ENCODE measurements at regions of chr2 and their contacts with region 1.

Region 1: DNA sequence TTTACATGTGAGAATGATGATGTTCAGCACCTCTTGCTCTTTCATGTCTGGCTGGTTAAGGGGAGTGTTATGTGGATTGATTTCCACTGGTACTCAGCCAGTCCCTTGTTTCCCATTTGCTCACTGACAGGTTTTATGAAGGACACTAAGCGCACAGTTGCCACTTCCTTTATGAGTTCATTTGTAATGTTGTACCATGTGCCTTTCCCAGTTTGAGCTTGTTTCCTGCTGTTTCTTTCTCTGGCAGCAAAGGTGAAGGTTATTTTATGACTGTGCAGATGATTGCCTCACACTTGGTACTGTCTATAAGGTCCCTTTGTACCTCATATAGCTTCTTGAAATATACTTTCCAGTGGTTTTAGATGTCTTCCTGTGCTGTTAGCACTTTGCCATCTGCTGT is 1700.5 kb upstream of the TMEFF2 start:
- DNase-seq: no peak

Region 2: DNA sequence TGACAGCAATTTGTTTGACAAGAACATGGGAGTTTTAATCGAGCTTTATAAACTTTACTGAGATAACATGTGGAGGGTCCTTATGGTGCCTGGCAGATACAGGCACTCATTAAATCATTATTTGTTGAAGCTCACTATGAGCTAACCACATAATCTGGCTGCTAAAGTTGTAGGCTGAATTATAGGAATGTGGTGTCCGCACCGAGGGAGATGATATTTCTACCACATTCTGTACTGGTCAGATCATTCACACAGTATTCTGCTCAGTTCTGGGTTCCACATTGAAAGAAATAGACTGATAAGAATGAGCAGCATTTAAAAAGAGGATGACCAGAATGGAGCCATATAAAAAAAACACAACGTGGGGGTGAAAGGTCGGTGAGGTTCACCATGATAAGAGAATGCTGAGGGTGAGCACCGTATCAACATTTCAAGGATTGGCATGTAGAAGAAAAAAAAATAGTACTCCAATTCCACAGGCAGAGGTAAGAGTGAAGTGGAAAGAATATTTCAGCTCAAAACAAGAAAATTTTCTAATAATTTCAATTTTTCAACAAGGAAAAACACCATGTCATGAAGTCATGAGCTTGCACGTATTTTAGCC is 1754.9 kb before region 1 on chr2:
- intact Hi-C with region 1: no loop called
- DNase-seq: no peak

Region 3: DNA sequence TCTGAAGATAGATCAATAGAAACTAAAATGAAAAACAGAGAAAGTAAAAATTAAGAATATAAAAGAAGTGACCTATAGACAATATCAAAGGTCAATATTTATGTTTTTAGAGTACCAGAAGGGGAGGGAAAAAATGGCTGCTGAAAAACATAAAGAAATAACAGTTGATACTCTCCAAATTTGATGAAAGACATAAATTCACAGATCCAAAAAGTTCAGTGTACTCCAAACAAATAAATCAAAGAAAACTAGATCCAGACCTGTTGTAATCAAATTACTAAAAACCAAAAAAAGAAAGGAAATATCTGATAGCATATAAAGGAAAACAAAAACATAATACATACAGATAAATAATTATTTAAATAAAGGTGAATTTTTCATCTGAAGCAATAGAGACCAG is 11.4 kb before region 1 on chr2:
- intact Hi-C with region 1: loop called in 1 of 2 experiments (anchors 1 kb)
- DNase-seq: no peak

Region 4: DNA sequence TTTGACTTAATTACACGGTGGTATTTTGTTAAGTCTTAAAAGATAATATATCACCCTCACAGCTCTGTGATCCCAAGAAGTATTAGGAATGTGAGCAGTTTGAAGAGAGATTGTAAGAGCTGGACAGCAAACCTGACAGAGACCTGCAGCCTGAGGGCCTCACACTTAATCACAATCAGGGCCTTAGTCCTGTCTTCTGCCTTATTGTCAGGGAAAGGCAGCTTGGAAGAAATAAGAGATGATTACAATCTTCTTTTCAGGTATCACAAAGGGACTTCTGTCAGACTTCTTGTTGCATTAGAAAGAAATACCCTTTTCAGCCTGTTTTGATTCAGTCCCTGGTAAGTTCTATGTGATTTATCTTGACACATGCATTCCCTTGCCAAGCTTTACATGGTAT is 328.0 kb after region 1 on chr2:
- intact Hi-C with region 1: no loop called
- DNase-seq: no peak